CD8-positive, alpha-beta T cell (primary cell): ENCODE measurements at regions of chr17 and their contacts with region 1.

Region 1: GRCh38 chr17:64063766-64064224 is 43.4 kb upstream of the ICAM2 start:
- DNase-seq: peak; percentile 20 to 73 (median 56)
- ATAC-seq: peak; percentile 54
- H3K4me3 ChIP-seq: no peak overlapping the region
- H3K4me3 Mint-ChIP-seq: peak overlapping the region; percentile 76
- H3K27ac ChIP-seq: peak overlapping the region in 1 of 2 experiments; percentile 58
- H3K27ac Mint-ChIP-seq: peak overlapping the region; percentile 86
- H3K4me1 ChIP-seq: peaks cover 32% of the 10 kb centered on the region
- H3K4me1 Mint-ChIP-seq: peaks cover 75% of the 10 kb centered on the region
- H3K27me3 ChIP-seq: no peaks in the 10 kb centered on the region
- H3K27me3 Mint-ChIP-seq: no peaks in the 10 kb centered on the region
- CTCF ChIP-seq: peak; percentile 33

Region 2: GRCh38 chr17:64051153-64051552 is 12.6 kb before region 1 on chr17:
- CTCF ChIA-PET with region 1: interaction called, 23 read pairs
- POLR2A ChIA-PET with region 1: interaction called, 28 read pairs
- intact Hi-C with region 1: no loop called
- DNase-seq: peak in 3 of 9 experiments; percentile 10 to 78 (median 67)
- ATAC-seq: peak; percentile 99
- H3K4me3 ChIP-seq: no peak overlapping the region
- H3K4me3 Mint-ChIP-seq: no peak overlapping the region
- H3K27ac ChIP-seq: peak overlapping the region; percentile 6 to 70
- H3K27ac Mint-ChIP-seq: peak overlapping the region; percentile 88
- H3K4me1 ChIP-seq: peaks cover 26% of the 10 kb centered on the region
- H3K4me1 Mint-ChIP-seq: peaks cover 35% of the 10 kb centered on the region
- H3K27me3 ChIP-seq: no peaks in the 10 kb centered on the region
- H3K27me3 Mint-ChIP-seq: no peaks in the 10 kb centered on the region
- CTCF ChIP-seq: no peak

Region 3: DNA sequence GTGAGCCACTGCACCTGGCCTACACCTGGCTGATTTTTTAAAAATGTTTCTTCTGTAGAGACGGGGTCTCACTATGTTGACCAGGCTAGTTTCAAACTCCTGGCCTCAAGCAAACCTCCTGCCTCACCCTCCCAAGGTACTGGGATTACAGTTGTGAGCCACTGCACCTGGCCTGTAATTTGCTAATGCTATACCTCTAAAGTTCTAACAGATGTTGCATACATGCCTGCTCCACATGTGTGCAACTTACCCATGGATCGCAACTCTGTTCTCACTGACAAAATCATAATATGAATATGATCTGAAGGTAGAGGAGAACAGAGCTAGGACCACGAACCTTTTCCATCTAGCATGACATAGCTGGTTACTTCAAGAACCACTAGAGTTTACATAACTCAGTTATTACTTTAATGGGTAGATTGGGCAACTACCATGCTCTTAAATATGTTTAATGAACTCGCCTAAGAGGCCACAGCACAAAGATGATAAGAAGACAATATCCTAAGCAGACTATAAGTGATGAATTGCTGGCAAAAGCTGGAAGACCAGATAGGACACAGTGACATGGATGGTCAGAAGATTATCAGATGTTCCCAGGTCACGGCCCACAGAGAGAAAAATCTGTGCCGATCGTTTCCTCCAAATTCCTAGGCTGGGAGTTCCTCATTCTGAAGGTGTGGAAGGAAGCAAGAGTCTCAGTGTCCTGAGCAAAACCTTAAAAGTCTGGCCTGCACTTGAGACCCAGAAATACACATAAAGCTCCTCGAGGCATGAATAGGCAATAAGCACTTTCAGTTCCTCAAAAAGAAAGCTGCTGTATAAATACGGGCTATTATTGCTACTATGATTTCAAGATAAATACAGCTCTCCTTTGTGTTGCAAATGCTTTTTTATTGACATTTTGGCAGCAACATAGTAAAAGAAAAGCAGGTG is 10.2 kb after region 1 on chr17:
- CTCF ChIA-PET with region 1: interaction called, 12 read pairs
- POLR2A ChIA-PET with region 1: interaction called, 3 read pairs
- intact Hi-C with region 1: no loop called
- DNase-seq: no peak
- ATAC-seq: no peak
- H3K4me3 ChIP-seq: no peak overlapping the region
- H3K4me3 Mint-ChIP-seq: no peak overlapping the region
- H3K27ac ChIP-seq: no peak overlapping the region
- H3K27ac Mint-ChIP-seq: no peak overlapping the region
- H3K4me1 ChIP-seq: no peaks in the 10 kb centered on the region
- H3K4me1 Mint-ChIP-seq: peaks cover 13% of the 10 kb centered on the region
- H3K27me3 ChIP-seq: no peaks in the 10 kb centered on the region
- H3K27me3 Mint-ChIP-seq: no peaks in the 10 kb centered on the region
- CTCF ChIP-seq: no peak

Region 4: GRCh38 chr17:64081802-64082799 is 18.3 kb after region 1 on chr17:
- CTCF ChIA-PET with region 1: interaction called, 12 read pairs
- POLR2A ChIA-PET with region 1: interaction called, 8 read pairs
- intact Hi-C with region 1: loop called in 1 of 2 experiments (anchors 2 kb)
- DNase-seq: peak in 5 of 9 experiments; percentile 17 to 68 (median 48)
- ATAC-seq: peak; percentile 83
- H3K4me3 ChIP-seq: peak overlapping the region in 1 of 2 experiments; percentile 10
- H3K4me3 Mint-ChIP-seq: peak overlapping the region; percentile 35
- H3K27ac ChIP-seq: peak overlapping the region in 1 of 2 experiments; percentile 50
- H3K27ac Mint-ChIP-seq: peak overlapping the region; percentile 66
- H3K4me1 ChIP-seq: peaks cover 37% of the 10 kb centered on the region
- H3K4me1 Mint-ChIP-seq: peaks cover 14% of the 10 kb centered on the region
- H3K27me3 ChIP-seq: no peaks in the 10 kb centered on the region
- H3K27me3 Mint-ChIP-seq: no peaks in the 10 kb centered on the region
- CTCF ChIP-seq: no peak

Region 5: DNA sequence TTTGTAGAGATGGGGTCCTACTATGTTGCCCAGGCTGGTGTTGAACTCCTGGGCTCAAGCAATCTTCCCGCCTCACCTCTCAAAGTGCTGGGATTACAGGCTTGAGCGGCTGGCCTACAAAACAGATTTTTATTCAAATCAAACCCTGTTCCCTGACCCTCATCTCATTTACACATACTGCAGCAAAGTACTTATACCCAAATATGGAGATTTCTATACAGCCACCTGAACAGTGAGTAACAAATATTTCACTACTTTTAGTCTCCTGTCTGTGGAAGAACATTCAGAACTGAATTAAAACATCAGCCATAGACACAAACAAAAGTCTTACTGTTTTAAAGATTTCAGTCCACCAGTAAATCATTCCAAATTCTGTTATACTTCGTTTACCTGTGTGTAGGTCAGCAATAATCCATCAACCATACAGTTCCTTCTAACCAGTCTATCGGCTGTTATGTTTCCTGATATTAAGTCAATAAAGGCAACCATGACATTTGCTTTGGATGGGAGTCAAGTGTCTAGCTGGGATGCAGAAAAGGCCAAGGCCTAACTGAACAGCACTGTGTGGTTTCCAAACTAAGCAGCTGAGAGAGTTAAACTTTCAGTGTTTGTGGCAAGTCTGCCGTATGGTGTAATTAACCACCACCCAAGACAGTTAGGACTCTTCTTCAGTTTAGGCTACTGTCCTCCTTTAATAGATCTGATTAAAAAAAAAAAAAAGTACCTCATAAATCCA is 43.9 kb after region 1 on chr17:
- CTCF ChIA-PET with region 1: interaction called, 10 read pairs
- POLR2A ChIA-PET with region 1: interaction called, 4 read pairs
- intact Hi-C with region 1: no loop called
- DNase-seq: no peak
- ATAC-seq: no peak
- H3K4me3 ChIP-seq: no peak overlapping the region
- H3K4me3 Mint-ChIP-seq: peak overlapping the region; percentile 3
- H3K27ac ChIP-seq: peak overlapping the region in 1 of 2 experiments; percentile 49
- H3K27ac Mint-ChIP-seq: peak overlapping the region; percentile 87
- H3K4me1 ChIP-seq: peaks cover 24% of the 10 kb centered on the region
- H3K4me1 Mint-ChIP-seq: peaks cover 69% of the 10 kb centered on the region
- H3K27me3 ChIP-seq: no peaks in the 10 kb centered on the region
- H3K27me3 Mint-ChIP-seq: no peaks in the 10 kb centered on the region
- CTCF ChIP-seq: no peak

Region 6: DNA sequence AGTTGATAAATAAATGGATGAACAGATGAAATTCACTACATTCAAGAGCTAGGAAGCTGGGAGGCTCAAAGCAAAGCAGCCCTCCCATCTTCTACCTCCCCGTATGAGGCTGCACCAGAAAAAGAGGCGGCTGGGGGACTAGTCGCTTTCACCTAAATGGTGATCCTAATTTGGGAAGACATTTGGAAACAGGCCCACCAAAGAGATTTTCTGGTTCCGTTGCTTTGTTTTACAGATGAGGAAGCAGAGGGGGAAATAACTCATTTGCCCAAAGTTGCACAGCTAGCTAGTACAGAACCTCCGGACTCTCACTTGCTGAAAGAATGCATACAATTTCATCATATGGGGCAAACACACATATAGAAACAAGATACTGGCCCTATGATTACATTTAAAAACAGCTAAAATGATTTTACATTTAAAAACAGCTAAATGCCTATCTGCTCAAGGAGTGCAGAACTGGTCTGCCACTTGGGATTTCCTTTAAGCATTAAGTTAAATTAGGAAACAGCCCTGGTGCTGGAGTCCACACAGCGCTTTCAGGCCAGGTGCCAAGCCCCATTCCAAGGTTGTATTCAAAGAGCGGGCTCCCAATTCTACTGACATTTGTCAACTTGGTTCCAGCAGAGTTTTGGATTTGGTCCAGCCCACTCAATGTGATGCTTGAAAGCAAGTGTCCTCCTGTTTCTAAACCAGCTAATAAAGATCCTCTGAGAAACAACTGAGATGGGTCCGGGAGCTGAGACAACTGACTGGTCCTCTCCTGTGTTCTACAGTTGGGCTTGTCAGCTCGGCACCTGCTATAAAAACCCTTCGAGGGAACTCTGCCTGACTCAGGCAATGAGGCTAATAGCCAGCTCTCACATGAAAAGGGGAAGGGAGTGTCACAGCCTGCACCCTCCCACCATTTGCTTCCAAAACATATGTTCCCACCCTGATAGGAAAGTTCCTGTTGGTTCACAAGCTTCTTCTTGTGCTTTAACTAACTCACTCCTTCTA is 54.5 kb after region 1 on chr17:
- CTCF ChIA-PET with region 1: interaction called, 12 read pairs
- POLR2A ChIA-PET with region 1: interaction called, 3 read pairs
- intact Hi-C with region 1: no loop called
- DNase-seq: peak in 1 of 9 experiments; percentile 36
- ATAC-seq: no peak
- H3K4me3 ChIP-seq: no peak overlapping the region
- H3K4me3 Mint-ChIP-seq: no peak overlapping the region
- H3K27ac ChIP-seq: no peak overlapping the region
- H3K27ac Mint-ChIP-seq: no peak overlapping the region
- H3K4me1 ChIP-seq: peaks cover 15% of the 10 kb centered on the region
- H3K4me1 Mint-ChIP-seq: peaks cover 60% of the 10 kb centered on the region
- H3K27me3 ChIP-seq: no peaks in the 10 kb centered on the region
- H3K27me3 Mint-ChIP-seq: no peaks in the 10 kb centered on the region
- CTCF ChIP-seq: no peak

Region 7: GRCh38 chr17:64281962-64282727 is 218.3 kb after region 1 on chr17:
- CTCF ChIA-PET with region 1: no interaction called
- POLR2A ChIA-PET with region 1: no interaction called
- intact Hi-C with region 1: loop called in 1 of 2 experiments (anchors 1 kb)
- DNase-seq: peak in 8 of 9 experiments; percentile 25 to 79 (median 51)
- ATAC-seq: peak; percentile 77
- H3K4me3 ChIP-seq: no peak overlapping the region
- H3K4me3 Mint-ChIP-seq: no peak overlapping the region
- H3K27ac ChIP-seq: no peak overlapping the region
- H3K27ac Mint-ChIP-seq: no peak overlapping the region
- H3K4me1 ChIP-seq: no peaks in the 10 kb centered on the region
- H3K4me1 Mint-ChIP-seq: no peaks in the 10 kb centered on the region
- H3K27me3 ChIP-seq: no peaks in the 10 kb centered on the region
- H3K27me3 Mint-ChIP-seq: peaks cover 3% of the 10 kb centered on the region
- CTCF ChIP-seq: peak; percentile 67